Activated B cell treated with CpG ODN at 0.5 μM for 24 hours (primary cell): ENCODE measurements at regions of chr1 and their contacts with region 1.

Region 1: GRCh38 chr1:172818841-172819527 is 160.1 kb downstream of the FASLG start:
- DNase-seq: peak; percentile 45
- ATAC-seq: peak; percentile 84
- H3K4me3 Mint-ChIP-seq: peak overlapping the region; percentile 77
- H3K27ac Mint-ChIP-seq: peak overlapping the region; percentile 96
- H3K4me1 Mint-ChIP-seq: peaks cover 47% of the 10 kb centered on the region
- H3K27me3 Mint-ChIP-seq: no peaks in the 10 kb centered on the region
- CTCF ChIP-seq: no peak

Region 2: GRCh38 chr1:171468120-171469035 is 1350.6 kb before region 1 on chr1:
- CTCF ChIA-PET with region 1: no interaction called
- POLR2A ChIA-PET with region 1: no interaction called
- intact Hi-C with region 1: no loop called
- DNase-seq: no peak
- ATAC-seq: no peak
- H3K4me3 Mint-ChIP-seq: no peak overlapping the region
- H3K27ac Mint-ChIP-seq: no peak overlapping the region
- H3K4me1 Mint-ChIP-seq: no peaks in the 10 kb centered on the region
- H3K27me3 Mint-ChIP-seq: peaks cover 4% of the 10 kb centered on the region
- CTCF ChIP-seq: no peak

Region 3: GRCh38 chr1:172180501-172181285 is 638.3 kb before region 1 on chr1:
- CTCF ChIA-PET with region 1: no interaction called
- POLR2A ChIA-PET with region 1: no interaction called
- intact Hi-C with region 1: loop called (anchors 5 kb)
- DNase-seq: no peak
- ATAC-seq: peak; percentile 76
- H3K4me3 Mint-ChIP-seq: peak overlapping the region; percentile 79
- H3K27ac Mint-ChIP-seq: peak overlapping the region; percentile 97
- H3K4me1 Mint-ChIP-seq: peaks cover 53% of the 10 kb centered on the region
- H3K27me3 Mint-ChIP-seq: no peaks in the 10 kb centered on the region
- CTCF ChIP-seq: no peak

Region 4: DNA sequence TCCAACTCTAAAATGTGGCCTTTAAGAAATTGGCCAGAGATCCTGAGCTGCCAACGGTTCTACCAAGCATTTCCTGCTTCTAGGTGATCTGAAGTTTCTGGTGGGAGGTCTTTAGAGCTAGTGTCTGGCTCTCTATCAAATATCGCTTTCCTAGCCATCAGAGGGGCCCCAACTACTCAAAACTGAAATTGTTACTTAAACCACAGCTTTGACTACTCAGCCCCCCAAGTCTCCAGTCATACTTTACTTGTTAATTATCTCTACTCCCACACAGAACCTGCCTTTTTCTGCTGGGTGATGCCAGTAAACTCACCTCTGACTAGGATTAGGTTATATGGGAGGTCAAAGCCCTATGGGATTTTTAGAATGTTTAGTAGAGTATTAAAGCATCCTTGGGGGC is 65.0 kb before region 1 on chr1:
- CTCF ChIA-PET with region 1: interaction called, 4 read pairs
- POLR2A ChIA-PET with region 1: interaction called, 6 read pairs
- intact Hi-C with region 1: loop called (anchors 2 kb)
- DNase-seq: no peak
- ATAC-seq: no peak
- H3K4me3 Mint-ChIP-seq: no peak overlapping the region
- H3K27ac Mint-ChIP-seq: no peak overlapping the region
- H3K4me1 Mint-ChIP-seq: peaks cover 27% of the 10 kb centered on the region
- H3K27me3 Mint-ChIP-seq: peaks cover 8% of the 10 kb centered on the region
- CTCF ChIP-seq: no peak

Region 5: DNA sequence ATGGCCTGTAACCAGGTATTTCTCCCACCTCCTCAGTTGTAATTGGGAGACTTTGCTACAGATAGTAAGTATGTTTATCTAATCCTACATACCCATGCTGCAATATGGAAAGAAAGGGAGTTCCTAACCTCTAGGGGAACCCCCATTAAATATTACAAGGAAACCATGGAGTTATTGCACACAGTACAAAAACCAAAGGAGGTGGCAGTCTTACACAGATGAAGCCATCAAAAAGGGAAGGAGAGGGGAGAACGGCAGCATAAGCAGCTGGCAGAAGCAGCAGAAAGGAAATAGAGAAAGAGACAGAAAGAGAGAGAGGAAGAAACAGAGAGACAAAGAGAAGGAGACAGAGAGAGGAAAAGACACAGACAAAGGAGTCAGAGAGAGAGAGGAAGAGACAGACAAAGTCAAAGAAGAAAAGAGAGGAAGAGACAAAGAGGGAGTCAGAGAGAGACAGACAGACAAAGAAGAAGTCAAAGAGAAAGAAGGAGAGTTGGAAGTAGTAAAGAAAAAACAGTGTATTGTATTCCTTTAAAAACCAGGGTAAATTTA is 17.1 kb before region 1 on chr1:
- CTCF ChIA-PET with region 1: no interaction called
- POLR2A ChIA-PET with region 1: no interaction called
- intact Hi-C with region 1: no loop called
- DNase-seq: no peak
- ATAC-seq: no peak
- H3K4me3 Mint-ChIP-seq: no peak overlapping the region
- H3K27ac Mint-ChIP-seq: no peak overlapping the region
- H3K4me1 Mint-ChIP-seq: peaks cover 1% of the 10 kb centered on the region
- H3K27me3 Mint-ChIP-seq: no peaks in the 10 kb centered on the region
- CTCF ChIP-seq: no peak

Region 6: DNA sequence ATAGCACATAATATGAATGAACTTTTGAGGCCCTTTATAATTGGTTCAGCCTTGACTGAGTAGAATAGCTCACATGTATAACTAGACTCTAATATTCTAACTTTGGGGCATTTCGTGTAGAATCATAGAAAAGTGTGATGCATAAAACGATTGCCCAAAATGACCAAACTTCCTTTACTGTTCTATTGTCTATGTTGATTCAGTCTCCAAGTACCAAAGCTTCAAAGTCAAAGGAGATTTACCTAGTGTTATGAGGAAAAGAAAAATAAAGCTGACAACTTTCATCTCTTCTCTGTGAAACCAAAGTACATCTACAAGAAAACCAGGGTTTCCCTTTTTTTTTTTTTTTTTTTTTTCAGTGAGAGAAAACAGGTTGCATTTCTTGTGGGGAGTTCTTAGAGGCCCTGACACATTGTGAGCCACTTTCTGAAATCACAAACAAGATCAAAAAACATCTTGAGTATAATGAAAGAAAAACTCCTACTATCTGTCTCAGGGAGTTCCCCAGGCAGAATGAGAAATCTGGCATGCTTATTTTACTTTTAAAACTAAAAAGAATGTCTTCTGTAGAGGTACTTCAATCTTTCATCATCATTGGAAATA is 48.3 kb after region 1 on chr1:
- CTCF ChIA-PET with region 1: no interaction called
- POLR2A ChIA-PET with region 1: no interaction called
- intact Hi-C with region 1: no loop called
- DNase-seq: no peak
- ATAC-seq: no peak
- H3K4me3 Mint-ChIP-seq: no peak overlapping the region
- H3K27ac Mint-ChIP-seq: no peak overlapping the region
- H3K4me1 Mint-ChIP-seq: peaks cover 12% of the 10 kb centered on the region
- H3K27me3 Mint-ChIP-seq: no peaks in the 10 kb centered on the region
- CTCF ChIP-seq: no peak

Region 7: GRCh38 chr1:173020138-173020750 is 201.3 kb after region 1 on chr1:
- CTCF ChIA-PET with region 1: no interaction called
- POLR2A ChIA-PET with region 1: interaction called, 16 read pairs
- intact Hi-C with region 1: loop called (anchors 1 kb)
- DNase-seq: no peak
- ATAC-seq: peak; percentile 84
- H3K4me3 Mint-ChIP-seq: peak overlapping the region; percentile 56
- H3K27ac Mint-ChIP-seq: peak overlapping the region; percentile 90
- H3K4me1 Mint-ChIP-seq: peaks cover 61% of the 10 kb centered on the region
- H3K27me3 Mint-ChIP-seq: no peaks in the 10 kb centered on the region
- CTCF ChIP-seq: no peak

Region 8: GRCh38 chr1:173267453-173267945 is 448.5 kb after region 1 on chr1:
- CTCF ChIA-PET with region 1: no interaction called
- POLR2A ChIA-PET with region 1: no interaction called
- intact Hi-C with region 1: loop called (anchors 2 kb)
- DNase-seq: no peak
- ATAC-seq: peak; percentile 65
- H3K4me3 Mint-ChIP-seq: no peak overlapping the region
- H3K27ac Mint-ChIP-seq: no peak overlapping the region
- H3K4me1 Mint-ChIP-seq: peaks cover 21% of the 10 kb centered on the region
- H3K27me3 Mint-ChIP-seq: no peaks in the 10 kb centered on the region
- CTCF ChIP-seq: no peak

Region 9: DNA sequence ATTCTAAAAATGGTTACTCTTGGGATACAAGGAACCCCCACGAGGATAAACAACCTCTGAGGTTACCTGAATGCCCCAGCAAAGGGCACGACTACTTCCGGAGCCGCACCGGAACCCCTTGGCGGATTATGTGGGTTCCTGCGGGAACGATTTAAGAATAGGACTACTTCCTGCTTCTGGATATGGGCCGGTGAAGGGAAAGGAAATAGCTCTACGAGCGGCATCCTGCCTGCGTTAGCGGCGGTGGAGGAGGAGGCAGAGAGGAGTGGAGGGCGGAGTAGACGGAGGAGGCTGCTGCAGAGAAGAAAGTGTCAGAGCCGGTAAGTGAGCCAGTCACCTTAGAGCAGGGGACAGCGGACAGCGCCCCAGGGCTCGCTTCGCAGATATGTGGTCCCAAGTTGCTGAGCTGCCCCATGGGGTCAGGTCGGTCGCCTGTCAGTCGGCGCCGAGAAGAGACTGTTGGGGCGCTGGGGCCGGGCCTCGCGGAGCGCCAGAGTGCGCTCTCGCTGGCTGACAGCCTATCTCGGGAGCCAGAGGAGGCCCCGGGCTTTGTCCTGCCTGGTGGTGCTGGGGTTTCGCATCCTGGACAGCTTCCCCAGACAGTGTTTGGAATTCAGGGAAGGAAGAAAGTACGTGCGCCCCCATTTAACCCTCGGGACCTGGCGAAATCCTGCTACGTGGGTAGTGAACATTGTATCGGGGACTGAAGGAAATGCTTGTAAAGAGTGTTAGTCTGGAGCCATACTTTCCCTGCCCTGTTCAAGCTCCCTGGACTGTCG is 896.0 kb after region 1 on chr1 and contains the start of gene KLHL20:
- CTCF ChIA-PET with region 1: no interaction called
- POLR2A ChIA-PET with region 1: no interaction called
- intact Hi-C with region 1: loop called (anchors 1 kb)
- DNase-seq: peak; percentile 71
- ATAC-seq: peak; percentile 96
- H3K4me3 Mint-ChIP-seq: peak within 1 kb of the TSS; percentile 93
- H3K27ac Mint-ChIP-seq: peak within 1 kb of the TSS; percentile 89
- H3K4me1 Mint-ChIP-seq: peaks cover 22% of the 10 kb centered on the region
- H3K27me3 Mint-ChIP-seq: peaks cover 14% of the 10 kb centered on the region
- CTCF ChIP-seq: no peak
- total RNA-seq, gene KLHL20: 19.6 and 26.1 TPM in 2 replicates

Region 10: DNA sequence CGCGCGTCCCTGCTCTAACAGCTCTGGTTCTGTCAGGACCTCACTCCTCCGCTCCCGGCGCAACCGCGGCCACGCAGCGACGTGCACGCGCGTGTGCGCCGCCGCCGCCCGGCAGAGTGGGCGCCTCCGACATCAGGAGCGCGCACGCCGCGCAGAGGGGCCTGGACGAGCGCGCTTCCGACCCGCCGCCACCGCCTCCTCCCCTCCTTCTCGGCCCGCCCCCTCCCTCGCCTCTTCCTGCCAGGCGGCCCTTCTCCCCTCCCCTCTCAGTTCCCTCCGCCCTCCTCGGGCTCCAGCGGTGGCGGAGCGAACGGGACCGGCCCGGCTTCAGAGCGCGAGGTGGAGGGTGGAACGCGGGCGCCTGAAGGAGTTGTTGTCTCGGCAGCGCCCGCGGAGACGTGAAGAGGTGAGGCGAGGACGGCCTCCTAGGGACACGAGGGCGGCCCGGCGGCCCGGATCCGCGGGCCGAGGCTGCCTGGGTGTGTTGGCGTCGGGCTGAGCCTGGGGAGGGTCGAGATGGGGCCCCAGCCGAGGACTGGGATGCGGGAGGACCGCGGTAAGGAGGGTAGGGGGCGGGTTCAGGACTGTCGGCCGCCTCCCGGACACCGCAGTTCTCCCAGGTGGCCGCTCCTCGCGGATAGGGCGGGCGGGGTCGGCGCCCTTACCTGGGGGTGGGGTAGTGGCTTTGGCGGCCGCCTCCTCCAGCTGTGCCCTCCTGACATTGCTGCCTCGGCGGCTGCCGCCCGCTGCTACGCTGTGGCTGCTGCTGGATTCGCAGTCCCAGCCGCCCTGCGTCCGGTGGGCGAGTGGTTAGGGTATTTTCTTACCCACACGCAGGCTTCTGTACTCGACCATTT is 1340.5 kb after region 1 on chr1 and contains the start of gene RABGAP1L:
- CTCF ChIA-PET with region 1: no interaction called
- POLR2A ChIA-PET with region 1: no interaction called
- intact Hi-C with region 1: loop called (anchors 2 kb)
- DNase-seq: peak; percentile 88
- ATAC-seq: peak; percentile 84
- H3K4me3 Mint-ChIP-seq: peak within 1 kb of the TSS; percentile 96
- H3K27ac Mint-ChIP-seq: peak within 1 kb of the TSS; percentile 99
- H3K4me1 Mint-ChIP-seq: peaks cover 72% of the 10 kb centered on the region
- H3K27me3 Mint-ChIP-seq: no peaks in the 10 kb centered on the region
- CTCF ChIP-seq: no peak
- total RNA-seq, gene RABGAP1L: 103 and 126 TPM in 2 replicates